GM10248 (cell line): ENCODE measurements at regions of chr6 and their contacts with region 1.

Region 1: DNA sequence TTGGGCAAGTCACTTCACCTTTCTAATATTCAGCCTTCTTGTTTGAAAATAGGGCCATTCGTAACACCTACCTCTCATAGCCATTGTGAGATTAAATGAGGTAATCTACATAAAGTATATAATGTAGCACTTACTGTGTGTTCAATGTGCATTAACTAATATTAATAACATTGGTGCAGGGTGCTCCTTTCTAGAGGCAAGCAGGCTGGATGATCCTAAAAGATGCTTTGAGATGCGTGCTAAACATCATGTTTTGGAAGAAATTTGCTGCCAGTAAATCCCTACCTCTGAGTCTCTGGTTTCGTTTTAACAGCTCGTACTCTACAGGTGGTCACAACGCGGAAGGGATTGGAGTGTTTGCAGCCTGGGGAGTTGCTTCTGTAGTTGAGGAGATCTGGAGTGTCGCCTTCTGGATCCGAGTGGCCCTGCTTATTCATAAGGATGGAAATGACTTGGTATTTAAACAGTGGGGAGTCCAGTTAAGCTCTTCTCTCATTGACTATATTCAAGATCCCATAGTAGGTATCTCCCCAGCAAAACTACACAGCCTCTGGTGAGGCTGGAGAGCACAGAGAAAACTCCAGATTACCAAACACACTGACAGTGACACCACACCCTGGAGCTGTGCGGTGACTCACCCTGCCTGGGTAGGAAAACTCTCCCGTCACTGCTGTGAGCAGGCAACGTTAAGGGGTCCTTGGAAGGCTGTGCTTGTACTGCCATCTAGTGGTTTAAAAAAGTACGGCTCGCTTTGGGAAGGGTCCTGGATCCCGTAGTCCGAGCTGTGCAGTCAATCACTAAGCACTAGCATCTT is 107.9 kb downstream of the MAP3K7 start:
- DNase-seq: peak; percentile 61
- CTCF ChIP-seq: peak; percentile 73

Region 2: DNA sequence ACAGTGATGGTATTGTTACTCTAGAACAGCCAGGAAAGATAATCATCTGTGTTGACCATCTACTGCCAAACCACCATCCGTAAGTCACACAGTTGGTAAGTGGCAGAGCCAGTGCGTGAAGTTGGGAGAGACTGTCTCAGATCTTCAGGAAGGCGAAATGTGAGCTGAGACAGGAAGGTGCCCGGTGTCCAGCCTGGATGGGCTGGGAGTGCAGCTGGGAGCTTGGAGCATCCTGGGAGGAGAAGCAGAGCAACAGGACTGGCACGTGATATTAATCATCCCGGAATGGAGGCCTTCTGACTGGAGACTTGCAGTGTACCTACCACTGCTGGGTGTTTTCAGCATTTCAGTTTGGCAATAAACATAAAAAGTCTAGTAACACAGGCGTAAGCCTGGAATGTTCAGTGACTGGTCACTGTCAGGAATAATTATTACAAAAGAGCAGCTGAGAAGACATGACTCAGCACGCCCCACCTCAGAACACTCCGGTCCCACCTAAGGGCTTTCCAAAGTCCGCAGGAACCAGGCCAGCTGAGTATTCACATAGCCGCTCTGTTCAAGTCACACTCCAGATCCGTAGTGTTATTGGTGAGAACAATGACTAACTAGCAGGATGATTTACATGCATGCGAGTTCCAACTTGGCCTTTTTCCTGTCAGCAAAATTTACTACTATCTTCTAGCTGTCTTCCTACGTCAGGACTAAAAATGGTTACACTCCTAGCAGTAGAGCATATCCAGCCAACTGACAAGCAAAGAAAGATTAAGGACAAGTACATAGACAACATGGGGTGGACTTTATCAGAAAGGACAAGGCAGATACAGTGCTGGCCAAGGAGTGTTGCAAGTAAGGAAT is 1443.5 kb before region 1 on chr6:
- CTCF ChIA-PET with region 1: no interaction called
- POLR2A ChIA-PET with region 1: no interaction called
- DNase-seq: no peak
- CTCF ChIP-seq: no peak

Region 3: GRCh38 chr6:89940225-89941027 is 538.6 kb before region 1 on chr6:
- CTCF ChIA-PET with region 1: interaction called, 136 read pairs
- POLR2A ChIA-PET with region 1: no interaction called
- DNase-seq: peak; percentile 75
- CTCF ChIP-seq: peak; percentile 65

Region 4: DNA sequence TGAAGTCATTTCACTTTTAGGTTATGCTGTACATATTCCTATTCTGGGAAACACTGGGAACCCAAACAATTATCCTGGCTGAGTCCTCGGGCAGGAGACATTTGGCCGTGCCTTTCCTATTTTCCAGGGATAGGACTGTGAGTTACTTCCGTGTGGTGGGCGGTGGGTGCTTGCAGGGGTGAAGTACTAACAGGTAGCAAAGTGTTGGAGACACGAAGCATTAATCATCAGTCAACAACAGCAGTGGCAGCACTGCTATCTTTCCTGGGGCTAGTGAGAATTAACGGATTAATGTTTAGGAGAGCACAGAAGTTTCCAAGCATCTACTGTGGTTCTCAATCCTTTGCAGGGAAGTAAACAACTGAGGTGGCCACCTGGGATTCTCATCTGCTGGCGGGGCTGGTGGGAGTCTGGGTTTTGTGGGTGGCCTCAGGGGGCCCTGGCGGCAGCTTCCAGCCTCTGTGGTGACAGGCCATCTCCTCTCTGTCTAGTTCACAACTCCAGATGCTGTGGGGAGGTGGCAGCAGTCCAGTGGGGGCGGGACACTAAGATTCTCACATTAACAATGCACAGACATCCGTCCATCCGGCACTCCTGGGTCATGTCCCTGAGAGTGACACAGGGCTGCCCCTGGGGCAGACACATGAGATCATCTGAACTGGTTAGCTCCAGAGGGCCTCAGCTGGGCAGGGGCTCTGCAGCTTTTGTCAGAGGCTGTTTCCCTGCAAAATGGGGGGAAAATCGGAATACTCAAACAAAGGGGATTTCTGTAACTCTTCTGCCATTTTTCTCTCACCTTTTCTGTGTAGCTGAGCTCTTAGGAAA is 493.9 kb before region 1 on chr6:
- CTCF ChIA-PET with region 1: no interaction called
- POLR2A ChIA-PET with region 1: no interaction called
- DNase-seq: no peak
- CTCF ChIP-seq: no peak

Region 5: GRCh38 chr6:90286884-90287488 is 192.0 kb before region 1 on chr6:
- CTCF ChIA-PET with region 1: interaction called, 12 read pairs
- POLR2A ChIA-PET with region 1: no interaction called
- DNase-seq: peak; percentile 17
- CTCF ChIP-seq: peak; percentile 61

Region 6: GRCh38 chr6:90425161-90425641 is 53.8 kb before region 1 on chr6:
- CTCF ChIA-PET with region 1: interaction called, 18 read pairs
- POLR2A ChIA-PET with region 1: no interaction called
- DNase-seq: peak; percentile 67
- CTCF ChIP-seq: no peak

Region 7: DNA sequence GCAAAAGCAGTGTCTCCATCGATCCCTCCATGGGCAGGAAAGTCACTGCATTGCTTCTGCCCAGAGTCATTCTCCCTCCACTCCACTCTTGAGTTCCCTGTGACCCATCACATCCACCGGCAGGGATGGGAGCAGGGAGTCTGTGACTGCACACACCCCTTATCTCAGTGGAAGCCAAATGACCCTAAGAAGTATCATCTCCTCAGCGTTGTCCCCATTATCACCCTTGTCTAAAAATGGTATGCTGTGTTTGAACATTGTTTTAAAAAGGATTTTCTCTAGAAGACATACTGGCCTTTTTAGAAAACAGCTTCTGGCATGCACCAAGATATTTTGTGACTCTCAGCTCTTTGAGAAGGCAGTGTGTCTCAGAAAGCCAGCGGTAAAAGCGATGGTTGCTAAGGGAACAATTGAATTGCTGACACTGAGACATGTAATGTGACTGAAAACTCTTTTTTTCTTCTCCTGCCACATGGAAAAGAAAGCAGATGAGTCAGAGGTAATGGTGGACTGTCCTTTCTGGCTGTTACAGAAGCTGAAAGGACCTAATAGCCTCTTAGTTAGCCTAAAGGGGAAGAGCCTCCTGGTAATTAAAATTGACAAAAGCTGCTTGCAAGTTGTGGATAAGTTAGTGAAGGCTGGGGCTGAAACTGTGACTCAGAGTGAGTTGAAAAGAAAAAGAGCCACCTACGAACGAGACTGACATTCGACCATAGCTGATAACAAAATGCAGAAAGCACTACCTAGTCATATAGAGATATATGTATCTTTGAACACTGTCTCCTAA is 12.6 kb before region 1 on chr6:
- CTCF ChIA-PET with region 1: interaction called, 11 read pairs
- POLR2A ChIA-PET with region 1: no interaction called
- DNase-seq: no peak
- CTCF ChIP-seq: no peak

Region 8: DNA sequence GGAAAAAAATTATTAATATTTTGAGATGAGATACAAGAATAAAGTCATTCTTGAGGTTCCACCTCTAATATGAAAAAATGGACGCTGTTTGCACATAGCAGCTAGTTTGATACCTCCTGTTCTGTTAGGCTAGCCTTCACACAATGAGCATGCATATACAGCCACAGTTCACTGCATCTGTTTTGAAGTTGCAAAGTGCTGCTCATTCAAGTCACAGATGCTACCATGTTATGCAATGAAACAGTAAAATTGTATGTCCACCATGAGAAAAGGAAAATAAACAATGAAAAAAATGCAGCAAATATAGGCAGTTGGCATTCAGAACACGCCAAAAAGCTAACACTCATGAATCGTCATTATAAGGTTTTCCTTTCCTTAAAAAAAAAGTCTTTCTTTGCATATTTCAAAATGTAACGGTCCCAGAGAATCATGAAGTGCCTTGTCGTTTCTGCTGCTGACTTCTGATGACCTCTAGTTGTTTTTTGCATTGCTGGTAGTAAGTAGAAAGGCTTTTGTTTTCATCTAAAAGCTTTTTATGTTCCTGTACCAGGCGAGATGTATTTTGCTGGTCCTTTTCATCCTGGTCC is 37.2 kb after region 1 on chr6:
- CTCF ChIA-PET with region 1: no interaction called
- POLR2A ChIA-PET with region 1: no interaction called
- DNase-seq: no peak
- CTCF ChIP-seq: no peak